Astrocyte of the cerebellum (primary cell): ENCODE measurements at regions of chr17 and their contacts with region 1.

Region 1: DNA sequence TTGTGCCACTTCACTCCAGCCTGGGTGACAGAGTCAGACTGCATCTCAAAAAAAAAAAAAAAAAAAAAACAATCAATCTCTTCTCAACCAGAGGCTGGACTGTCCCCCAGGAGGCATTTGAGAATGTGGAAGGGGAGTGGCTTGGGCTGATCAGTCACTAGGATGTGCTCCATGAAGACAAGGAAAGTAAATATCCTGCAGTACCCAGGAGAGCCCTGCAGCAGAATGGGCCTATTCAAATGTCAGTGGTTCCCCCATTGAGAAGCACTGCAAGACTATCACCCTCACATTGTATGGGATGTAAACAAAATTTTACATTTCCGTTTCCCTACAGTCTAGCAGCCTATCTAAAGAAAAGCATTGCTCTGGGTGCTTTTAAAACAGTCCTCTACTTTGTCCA is 70.3 kb downstream of the DNAH9 start:
- DNase-seq: no peak
- H3K4me3 ChIP-seq: no peak overlapping the region
- CTCF ChIP-seq: no peak

Region 2: DNA sequence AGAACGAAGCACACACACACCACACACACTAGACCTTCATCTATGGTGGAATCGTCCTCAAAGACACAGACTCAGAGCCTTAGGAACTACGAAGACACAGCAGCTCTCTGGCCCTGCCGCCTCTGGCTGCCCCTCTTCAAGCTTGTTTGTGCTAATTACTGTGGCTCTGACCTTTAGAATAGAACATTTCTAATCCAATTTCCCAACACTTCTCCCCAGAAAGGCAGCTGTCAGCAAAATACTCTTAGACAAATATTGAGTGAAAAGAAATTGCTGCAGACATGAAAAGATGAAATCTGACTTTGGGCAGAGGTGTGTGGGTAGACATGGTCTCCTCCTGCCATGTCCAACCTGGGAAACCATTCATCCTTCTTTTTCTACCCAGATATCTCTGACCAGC is 222.3 kb before region 1 on chr17:
- in situ Hi-C with region 1: loop called (anchors 10 kb)
- DNase-seq: no peak
- H3K4me3 ChIP-seq: no peak overlapping the region
- CTCF ChIP-seq: no peak

Region 3: GRCh38 chr17:11880714-11881113 is 212.1 kb after region 1 on chr17:
- in situ Hi-C with region 1: no loop called
- DNase-seq: peak; percentile 6
- H3K4me3 ChIP-seq: no peak overlapping the region
- CTCF ChIP-seq: peak; percentile 30